Heart right ventricle (tissue), 16 donors: ENCODE measurements at regions of chr14 and their contacts with region 1.

Region 1: DNA sequence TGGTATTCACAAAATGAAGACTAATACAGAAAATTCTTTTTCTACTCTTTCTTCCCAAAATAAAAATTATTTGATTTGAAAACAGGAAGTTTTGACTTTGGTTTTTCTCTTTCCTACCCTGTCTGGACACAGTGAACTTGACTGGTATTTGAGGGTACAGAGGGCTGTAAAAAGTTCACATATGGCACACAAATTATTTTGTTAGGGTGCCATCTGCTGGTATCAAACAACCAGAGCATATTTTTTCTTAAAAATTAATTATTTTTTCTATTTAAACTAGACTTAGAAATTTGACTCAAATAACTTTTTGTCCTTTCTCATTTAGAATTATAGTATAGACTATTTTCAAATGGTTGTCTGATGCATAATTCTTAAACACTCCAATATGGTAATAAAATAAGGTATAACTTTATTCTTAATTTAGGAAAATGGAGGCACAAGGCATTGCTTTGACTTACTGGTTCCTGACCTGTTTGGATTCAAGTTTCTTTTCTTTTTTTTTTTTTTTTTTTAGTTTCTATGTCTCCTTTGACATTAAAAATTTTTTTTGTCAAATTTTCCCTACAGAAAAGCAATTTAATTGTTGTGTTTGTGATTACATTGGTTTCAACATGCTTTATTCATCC is 390.6 kb downstream of the PRKD1 start:
- DNase-seq: no peak
- ATAC-seq: no peak
- H3K4me3 ChIP-seq: no peak overlapping the region
- H3K27ac ChIP-seq: no peak overlapping the region
- H3K4me1 ChIP-seq: no peaks in the 10 kb centered on the region
- H3K27me3 ChIP-seq: peaks cover 0 to 24% (median 6%) of the 10 kb centered on the region in 7 donors
- CTCF ChIP-seq: peak in 7 of 9 donors; percentile 33 to 55 (median 41)

Region 2: GRCh38 chr14:28756884-28757570 is 780.0 kb before region 1 on chr14:
- intact Hi-C with region 1: loop called in 8 of 10 experiments (anchors 5 to 10 kb)
- DNase-seq: no peak
- ATAC-seq: no peak
- H3K4me3 ChIP-seq: no peak overlapping the region
- H3K27ac ChIP-seq: no peak overlapping the region
- H3K4me1 ChIP-seq: peaks cover 0 to 15% (median 3%) of the 10 kb centered on the region in 9 donors
- H3K27me3 ChIP-seq: peaks cover 26 to 100% (median 97%) of the 10 kb centered on the region in 7 donors
- CTCF ChIP-seq: peak in 7 of 9 donors; percentile 9 to 56 (median 44)